SK-N-SH (cell line): ENCODE measurements at regions of chr18 and their contacts with region 1.

Region 1: GRCh38 chr18:48777026-48777743 is 173.6 kb downstream of the SMAD7 start:
- DNase-seq: peak; percentile 90
- H3K4me3 ChIP-seq: no peak overlapping the region; a peak in 1 of 4 replicates
- H3K27ac ChIP-seq: peak overlapping the region; percentile 9 to 58; a peak in 3 of 4 replicates
- H3K4me1 ChIP-seq: peaks cover 33 to 58% of the 10 kb centered on the region in 2 experiments
- H3K27me3 ChIP-seq: no peaks in the 10 kb centered on the region
- CTCF ChIP-seq: peak; percentile 86
- EP300 ChIP-seq: no peak
- RAD21 ChIP-seq: peak; percentile 84

Region 2: GRCh38 chr18:48698707-48699106 is 78.5 kb before region 1 on chr18:
- CTCF ChIA-PET with region 1: no interaction called
- POLR2A ChIA-PET with region 1: no interaction called
- DNase-seq: no peak
- H3K4me3 ChIP-seq: no peak overlapping the region
- H3K27ac ChIP-seq: no peak overlapping the region
- H3K4me1 ChIP-seq: peaks cover 0 to 14% of the 10 kb centered on the region in 2 experiments; a peak in 2 of 4 replicates
- H3K27me3 ChIP-seq: no peaks in the 10 kb centered on the region
- CTCF ChIP-seq: no peak
- EP300 ChIP-seq: no peak
- RAD21 ChIP-seq: no peak

Region 3: DNA sequence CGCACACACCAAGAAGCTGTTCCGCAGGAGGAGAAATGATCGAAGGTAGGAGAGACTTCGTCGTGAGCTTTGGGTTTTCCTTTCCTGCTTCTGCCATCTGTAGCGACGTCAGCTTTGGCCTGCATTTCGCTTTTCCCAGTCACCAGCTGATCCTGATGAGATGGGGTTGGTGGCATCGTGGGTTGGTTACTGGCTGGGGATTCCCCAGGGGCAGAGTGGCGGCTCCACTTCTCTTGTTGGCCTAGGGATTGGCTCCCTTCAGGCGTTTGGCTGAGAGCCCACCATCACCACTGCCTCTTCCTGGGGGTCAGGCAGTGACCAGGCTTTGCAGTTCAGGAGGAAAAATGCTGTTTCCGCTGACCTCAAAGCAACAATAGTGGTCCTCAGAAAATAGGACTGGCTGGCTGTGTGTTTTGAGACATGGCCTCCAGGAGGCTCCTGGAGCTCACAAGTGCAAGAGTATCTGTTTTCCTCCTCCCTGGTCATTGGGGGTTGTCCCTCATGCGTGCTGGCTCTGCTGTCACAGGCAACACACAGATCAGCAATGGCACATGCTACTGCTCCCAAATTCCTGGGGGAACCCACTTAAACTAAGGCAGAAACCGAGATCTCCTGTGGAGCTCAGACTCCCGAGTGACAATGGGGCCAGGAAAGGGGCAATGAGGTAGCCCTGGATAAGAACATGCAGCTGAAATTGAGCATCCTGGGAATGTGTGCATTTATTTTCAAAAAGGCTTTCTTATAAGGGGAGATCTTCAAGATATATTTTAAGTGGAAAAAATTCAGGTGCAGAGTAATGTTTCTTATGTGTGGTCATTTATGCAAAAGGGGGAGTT is 65.3 kb before region 1 on chr18:
- CTCF ChIA-PET with region 1: interaction called, 10 read pairs
- POLR2A ChIA-PET with region 1: no interaction called
- DNase-seq: peak; percentile 85
- H3K4me3 ChIP-seq: no peak overlapping the region
- H3K27ac ChIP-seq: no peak overlapping the region
- H3K4me1 ChIP-seq: peaks cover 0 to 29% of the 10 kb centered on the region in 2 experiments; a peak in 2 of 4 replicates
- H3K27me3 ChIP-seq: no peaks in the 10 kb centered on the region
- CTCF ChIP-seq: peak; percentile 64
- EP300 ChIP-seq: no peak
- RAD21 ChIP-seq: peak; percentile 91

Region 4: GRCh38 chr18:48790226-48790874 is 13.2 kb after region 1 on chr18:
- CTCF ChIA-PET with region 1: interaction called, 17 read pairs
- POLR2A ChIA-PET with region 1: no interaction called
- DNase-seq: no peak
- H3K4me3 ChIP-seq: no peak overlapping the region
- H3K27ac ChIP-seq: no peak overlapping the region; a peak in 1 of 4 replicates
- H3K4me1 ChIP-seq: peaks cover 12 to 43% of the 10 kb centered on the region in 2 experiments; a peak in 3 of 4 replicates
- H3K27me3 ChIP-seq: no peaks in the 10 kb centered on the region
- CTCF ChIP-seq: no peak
- EP300 ChIP-seq: no peak
- RAD21 ChIP-seq: no peak

Region 5: DNA sequence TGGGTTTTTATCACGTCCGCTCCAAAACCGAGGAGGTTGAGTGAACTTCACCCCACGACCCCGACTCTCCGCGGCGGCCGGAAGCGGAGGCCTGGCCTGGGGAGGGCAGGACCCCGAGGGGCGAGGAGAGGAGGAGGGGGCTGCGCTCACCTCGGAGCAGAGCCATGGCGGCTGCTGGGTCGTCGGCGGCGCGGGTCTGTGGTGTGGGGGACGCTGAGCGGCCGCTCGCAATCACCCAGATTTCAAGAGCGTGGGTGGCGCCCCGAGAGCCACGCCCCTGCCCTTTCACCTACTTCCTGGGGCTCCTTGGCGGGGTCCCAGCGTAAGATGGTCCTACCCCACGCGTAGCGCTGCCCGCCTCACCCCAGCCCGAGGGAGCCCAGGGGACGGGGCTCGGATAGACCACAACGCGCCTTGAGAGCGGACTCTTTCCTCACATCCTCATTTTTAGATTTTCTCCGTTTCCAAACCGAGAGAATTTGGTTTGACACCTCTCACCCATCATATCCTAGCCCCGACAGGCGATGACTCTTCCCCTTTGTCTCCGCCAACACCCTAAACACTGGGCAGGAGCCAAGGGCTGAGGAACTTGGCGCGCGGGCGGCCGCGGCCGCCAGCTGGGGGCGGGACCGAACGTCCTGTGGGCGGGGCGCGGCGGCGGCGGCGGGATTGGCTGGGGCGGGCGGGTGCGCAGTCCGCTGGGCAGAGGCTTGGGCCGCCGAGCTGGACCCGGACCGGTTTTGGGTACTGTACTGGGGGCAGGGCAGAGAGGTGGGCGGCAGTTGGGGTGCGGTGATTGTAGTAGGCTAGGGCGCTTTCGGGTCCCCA is 1036.3 kb after region 1 on chr18 and contains the start of gene ACAA2:
- CTCF ChIA-PET with region 1: no interaction called
- POLR2A ChIA-PET with region 1: no interaction called
- DNase-seq: peak; percentile 90
- H3K4me3 ChIP-seq: peak within 1 kb of the TSS; percentile 84 to 94
- H3K27ac ChIP-seq: peak within 1 kb of the TSS; percentile 95 to 96
- H3K4me1 ChIP-seq: peaks cover 0 to 15% of the 10 kb centered on the region in 2 experiments; a peak in 2 of 4 replicates
- H3K27me3 ChIP-seq: no peaks in the 10 kb centered on the region
- CTCF ChIP-seq: no peak
- EP300 ChIP-seq: no peak
- RAD21 ChIP-seq: no peak
- polyA plus RNA-seq, gene ACAA2: 29.3 and 34.9 TPM in 2 replicates